ENCODE measurements at regions of chr3 and their contacts with region 1.

Region 1: DNA sequence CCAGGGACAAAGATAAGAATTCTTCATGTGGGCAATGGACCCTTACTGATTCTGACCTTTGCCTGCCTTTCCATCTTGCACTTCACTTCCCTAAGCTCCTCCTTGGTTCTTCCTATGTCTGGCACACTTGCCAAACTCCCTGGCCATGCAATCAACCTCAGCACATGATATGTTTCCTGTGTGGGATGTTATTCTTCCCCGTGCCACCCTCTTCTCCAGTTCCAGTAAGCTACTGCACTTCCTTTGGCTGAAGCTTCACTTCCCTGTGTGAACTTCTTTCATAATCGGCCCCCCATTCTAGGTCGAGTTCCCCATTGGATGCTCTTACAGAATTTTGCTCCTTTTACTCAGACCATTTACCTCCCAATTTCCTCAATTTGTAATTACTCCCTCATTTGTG is 10.7 kb upstream of the TASOR start:
- DNase-seq: no peak
- H3K4me3 ChIP-seq: no peak overlapping the region
- H3K27ac ChIP-seq: no peak overlapping the region
- H3K4me1 ChIP-seq: peaks cover 6% of the 10 kb centered on the region
- H3K27me3 ChIP-seq: no peaks in the 10 kb centered on the region
- CTCF ChIP-seq: no peak

Region 2: GRCh38 chr3:56673781-56674457 is 19.8 kb before region 1 on chr3:
- CTCF ChIA-PET with region 1: interaction called, 10 read pairs
- POLR2A ChIA-PET with region 1: no interaction called
- intact Hi-C with region 1: no loop called
- DNase-seq: no peak
- H3K4me3 ChIP-seq: no peak overlapping the region
- H3K27ac ChIP-seq: no peak overlapping the region
- H3K4me1 ChIP-seq: no peaks in the 10 kb centered on the region
- H3K27me3 ChIP-seq: no peaks in the 10 kb centered on the region
- CTCF ChIP-seq: no peak

Region 3: DNA sequence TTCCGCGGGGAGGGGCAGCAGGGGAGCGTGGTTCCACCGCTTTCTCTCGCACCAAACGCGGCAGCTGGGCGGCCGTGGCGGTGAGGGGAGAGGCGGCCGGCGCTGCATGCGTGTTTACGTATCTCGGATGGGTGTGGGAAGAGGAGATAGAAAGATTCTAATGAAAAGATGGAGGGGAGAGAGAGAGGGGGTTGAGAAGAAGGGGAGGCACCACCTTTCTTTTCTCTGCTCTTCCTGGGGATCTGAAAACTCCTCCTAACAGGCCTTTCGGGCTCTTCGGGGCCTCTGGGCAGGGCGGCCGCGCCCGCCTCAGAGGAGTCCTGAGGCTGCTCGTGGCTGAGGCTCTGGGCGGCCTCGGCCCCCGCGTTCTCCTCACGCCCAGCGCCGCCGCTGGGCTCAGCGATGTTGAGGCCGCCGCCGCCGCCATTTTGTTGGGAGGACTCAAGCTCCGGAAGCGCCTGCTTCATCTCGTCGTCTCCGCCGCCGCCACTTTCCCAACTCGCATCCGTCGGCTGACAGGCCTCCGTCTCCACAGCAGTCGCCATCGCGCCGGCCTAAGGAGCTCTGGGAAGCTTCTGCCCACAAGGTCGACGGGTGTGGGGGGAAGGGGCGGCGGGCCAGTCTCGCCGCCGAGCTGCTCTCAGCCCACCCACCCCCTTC is 11.2 kb before region 1 on chr3:
- CTCF ChIA-PET with region 1: no interaction called
- POLR2A ChIA-PET with region 1: no interaction called
- intact Hi-C with region 1: loop called (anchors 1 kb)
- DNase-seq: peak; percentile 37 to 56
- H3K4me3 ChIP-seq: peak overlapping the region; percentile 76
- H3K27ac ChIP-seq: peak overlapping the region; percentile 84
- H3K4me1 ChIP-seq: peaks cover 26% of the 10 kb centered on the region
- H3K27me3 ChIP-seq: no peaks in the 10 kb centered on the region
- CTCF ChIP-seq: no peak

Measured in PC-9 (cell line).